IMR-90 (cell line): ENCODE measurements at regions of chr3 and their contacts with region 1.

Region 1: GRCh38 chr3:9731206-9732079 is at the start of gene BRPF1:
- DNase-seq: peak; percentile 99
- ATAC-seq: peak; percentile 97
- H3K4me3 ChIP-seq: peak within 1 kb of the TSS; percentile 94
- H3K27ac ChIP-seq: peak within 1 kb of the TSS; percentile 100
- H3K4me1 ChIP-seq: peaks cover 8% of the 10 kb centered on the region; the same call in 1 of the 2 replicates
- H3K27me3 ChIP-seq: no peaks in the 10 kb centered on the region
- CTCF ChIP-seq: no peak; the same call in 1 of the 2 replicates
- POLR2A ChIP-seq: peak; percentile 75
- RAD21 ChIP-seq: no peak
- total RNA-seq, gene BRPF1: 15.6 and 16.4 TPM in 2 replicates

Region 2: DNA sequence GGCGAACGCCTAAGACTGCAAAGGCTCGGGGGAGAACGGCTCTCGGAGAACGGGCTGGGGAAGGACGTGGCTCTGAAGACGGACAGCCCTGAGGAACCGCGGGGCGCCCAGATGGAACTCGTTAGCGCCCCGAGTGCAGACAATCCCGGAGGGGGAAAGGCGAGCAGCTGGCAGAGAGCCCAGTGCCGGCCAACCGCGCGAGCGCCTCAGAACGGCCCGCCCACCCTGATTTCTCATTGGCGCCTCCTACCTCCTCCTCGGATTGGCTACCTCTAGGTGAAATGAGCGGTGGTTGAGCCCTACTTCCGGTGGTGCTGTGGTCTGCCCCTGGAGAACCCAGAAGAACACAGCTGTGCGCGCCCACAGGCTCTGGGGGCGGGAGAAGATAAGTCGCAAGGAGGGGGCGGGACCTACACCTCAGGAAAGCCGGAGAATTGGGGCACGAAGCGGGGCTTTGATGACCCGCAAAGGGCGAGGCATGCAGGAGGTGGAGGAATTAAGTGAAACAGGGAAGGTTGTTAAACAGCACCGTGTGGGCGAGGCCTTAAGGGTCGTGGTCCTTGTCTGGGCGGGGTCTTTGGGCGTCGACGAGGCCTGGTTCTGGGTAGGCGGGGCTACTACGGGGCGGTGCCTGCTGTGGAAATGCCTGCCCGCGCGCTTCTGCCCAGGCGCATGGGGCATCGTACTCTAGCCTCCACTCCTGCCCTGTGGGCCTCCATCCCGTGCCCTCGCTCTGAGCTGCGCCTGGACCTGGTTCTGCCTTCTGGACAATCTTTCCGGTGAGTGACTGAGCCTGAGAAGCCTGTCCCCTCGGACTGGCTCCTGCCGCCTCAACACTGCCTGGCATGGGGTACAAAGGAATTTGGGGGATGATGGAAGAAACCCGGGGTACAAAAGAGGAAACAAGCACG is 18.5 kb after region 1 on chr3 and contains the start of gene OGG1:
- CTCF ChIA-PET with region 1: no interaction called
- POLR2A ChIA-PET with region 1: interaction called, 5 read pairs
- dilution Hi-C with region 1: no loop called
- in situ Hi-C with region 1: no loop called
- intact Hi-C with region 1: loop called (anchors 1 kb)
- DNase-seq: peak; percentile 98
- ATAC-seq: peak; percentile 94
- H3K4me3 ChIP-seq: peak within 1 kb of the TSS; percentile 64
- H3K27ac ChIP-seq: peak within 1 kb of the TSS; percentile 90
- H3K4me1 ChIP-seq: peaks cover 20% of the 10 kb centered on the region
- H3K27me3 ChIP-seq: no peaks in the 10 kb centered on the region
- CTCF ChIP-seq: no peak
- POLR2A ChIP-seq: peak; percentile 27; the same call in 1 of the 2 replicates
- RAD21 ChIP-seq: no peak
- total RNA-seq, gene OGG1: 14.9 and 15.8 TPM in 2 replicates

Region 3: DNA sequence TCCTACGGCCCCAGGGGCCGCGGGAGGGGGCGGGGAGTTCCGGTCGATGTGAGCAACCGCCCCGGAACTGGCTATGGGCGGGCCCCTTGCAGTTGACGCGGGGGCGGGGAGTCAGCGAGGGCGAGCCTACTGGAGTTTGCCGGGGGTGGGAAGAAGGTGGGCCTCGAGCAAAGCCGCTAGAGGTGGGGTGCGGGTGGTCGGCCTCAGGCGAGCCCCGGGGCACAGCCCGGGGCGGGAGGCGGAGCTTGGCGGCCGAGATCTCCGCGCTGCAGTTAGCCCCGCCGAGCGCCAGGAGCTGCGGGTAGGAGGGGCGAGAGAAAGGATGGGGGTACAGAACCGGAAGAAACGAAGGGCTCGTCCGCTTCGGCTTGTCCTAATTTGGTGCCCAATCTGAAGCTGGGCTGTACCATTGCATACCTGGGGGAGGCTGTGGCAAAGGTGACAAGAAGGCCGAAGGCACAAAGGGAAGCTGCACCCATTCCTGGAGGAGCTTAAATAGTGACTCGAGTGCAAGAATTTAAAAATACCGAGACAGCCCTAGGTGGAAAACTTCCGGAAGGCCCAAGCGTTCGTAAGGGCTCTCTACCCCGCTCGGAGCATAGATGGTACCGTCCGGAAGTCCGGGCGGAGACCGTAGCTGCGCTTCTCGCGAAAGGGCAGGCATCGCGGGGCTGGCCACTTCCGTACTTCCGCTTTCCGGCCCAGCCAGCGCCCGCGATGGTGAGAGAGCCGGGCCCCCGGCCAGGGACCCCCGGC is 61.1 kb after region 1 on chr3 and contains the starts of genes ARPC4 and TADA3:
- CTCF ChIA-PET with region 1: no interaction called
- POLR2A ChIA-PET with region 1: no interaction called
- dilution Hi-C with region 1: no loop called
- in situ Hi-C with region 1: no loop called
- intact Hi-C with region 1: loop called (anchors 5 kb)
- DNase-seq: peak; percentile 96
- ATAC-seq: peak; percentile 89
- H3K4me3 ChIP-seq: peak within 1 kb of the TSS; percentile 88
- H3K27ac ChIP-seq: peak within 1 kb of the TSS; percentile 95
- H3K4me1 ChIP-seq: peaks cover 9% of the 10 kb centered on the region
- H3K27me3 ChIP-seq: no peaks in the 10 kb centered on the region
- CTCF ChIP-seq: no peak
- POLR2A ChIP-seq: peak; percentile 94
- RAD21 ChIP-seq: no peak
- total RNA-seq, gene ARPC4: 383 and 405 TPM in 2 replicates
- total RNA-seq, gene TADA3: 69.7 and 83.0 TPM in 2 replicates

Region 4: GRCh38 chr3:9890249-9891071 is 159.0 kb after region 1 on chr3 and contains the start of gene JAGN1:
- CTCF ChIA-PET with region 1: no interaction called
- POLR2A ChIA-PET with region 1: no interaction called
- dilution Hi-C with region 1: no loop called
- in situ Hi-C with region 1: no loop called
- intact Hi-C with region 1: no loop called
- DNase-seq: peak; percentile 83
- ATAC-seq: peak; percentile 94
- H3K4me3 ChIP-seq: peak within 1 kb of the TSS; percentile 79
- H3K27ac ChIP-seq: peak within 1 kb of the TSS; percentile 97
- H3K4me1 ChIP-seq: peaks cover 2% of the 10 kb centered on the region; the same call in 1 of the 2 replicates
- H3K27me3 ChIP-seq: no peaks in the 10 kb centered on the region
- CTCF ChIP-seq: no peak
- POLR2A ChIP-seq: peak; percentile 85
- RAD21 ChIP-seq: no peak
- total RNA-seq, gene JAGN1: 39.3 and 40.5 TPM in 2 replicates